Activated naive CD4-positive, alpha-beta T cell treated with anti-CD3 and anti-CD28 coated beads for 36 hours (primary cell): ENCODE measurements at regions of chr19 and their contacts with region 1.

Region 1: DNA sequence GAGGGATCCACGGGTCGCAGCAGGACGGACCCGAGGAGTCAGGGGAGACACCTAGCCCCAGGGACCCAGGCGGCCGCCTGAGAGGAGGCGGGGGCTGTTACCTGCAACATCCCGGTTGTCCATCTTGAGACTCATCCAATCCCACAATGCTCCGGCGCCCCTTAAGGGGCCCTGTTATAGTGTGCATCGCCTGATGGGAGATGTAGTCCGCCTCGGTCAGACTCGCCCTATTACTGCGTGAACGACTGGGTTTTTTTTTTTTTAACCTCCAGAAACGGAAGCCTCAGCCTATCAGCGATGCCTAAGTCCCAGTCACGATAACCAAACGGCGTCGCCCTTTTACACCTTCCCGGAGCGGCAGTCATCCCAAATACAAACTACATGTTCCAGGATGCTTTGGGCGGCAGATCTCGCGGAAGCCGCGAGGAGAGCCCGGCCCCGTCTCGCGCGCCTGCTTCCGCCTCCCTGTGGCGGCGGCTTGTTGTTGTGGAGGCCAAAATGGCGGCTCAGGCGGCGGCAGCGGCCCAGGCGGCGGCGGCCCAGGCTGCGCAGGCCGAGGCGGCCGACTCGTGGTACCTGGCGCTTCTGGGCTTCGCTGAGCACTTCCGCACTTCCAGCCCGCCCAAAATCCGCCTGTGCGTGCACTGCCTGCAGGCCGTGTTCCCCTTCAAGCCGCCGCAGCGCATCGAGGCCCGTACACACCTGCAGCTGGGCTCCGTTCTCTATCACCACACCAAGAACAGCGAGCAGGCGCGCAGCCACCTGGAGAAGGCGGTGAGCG is at the starts of genes MAU2 and SUGP1:
- DNase-seq: peak; percentile 94
- H3K4me3 Mint-ChIP-seq: peak within 1 kb of the TSS; percentile 93
- H3K27ac Mint-ChIP-seq: peak within 1 kb of the TSS; percentile 99
- H3K4me1 Mint-ChIP-seq: peaks cover 47% of the 10 kb centered on the region
- H3K27me3 Mint-ChIP-seq: no peaks in the 10 kb centered on the region
- total RNA-seq, gene MAU2: 38.6 to 42.5 TPM
- total RNA-seq, gene SUGP1: 31.7 to 32.4 TPM

Region 2: GRCh38 chr19:18636183-18636968 is 684.2 kb before region 1 on chr19:
- CTCF ChIA-PET with region 1: no interaction called
- intact Hi-C with region 1: loop called (anchors 1 kb)
- DNase-seq: peak; percentile 100
- H3K4me3 Mint-ChIP-seq: peak overlapping the region; percentile 81
- H3K27ac Mint-ChIP-seq: peak overlapping the region; percentile 57
- H3K4me1 Mint-ChIP-seq: peaks cover 23% of the 10 kb centered on the region
- H3K27me3 Mint-ChIP-seq: no peaks in the 10 kb centered on the region

Region 3: DNA sequence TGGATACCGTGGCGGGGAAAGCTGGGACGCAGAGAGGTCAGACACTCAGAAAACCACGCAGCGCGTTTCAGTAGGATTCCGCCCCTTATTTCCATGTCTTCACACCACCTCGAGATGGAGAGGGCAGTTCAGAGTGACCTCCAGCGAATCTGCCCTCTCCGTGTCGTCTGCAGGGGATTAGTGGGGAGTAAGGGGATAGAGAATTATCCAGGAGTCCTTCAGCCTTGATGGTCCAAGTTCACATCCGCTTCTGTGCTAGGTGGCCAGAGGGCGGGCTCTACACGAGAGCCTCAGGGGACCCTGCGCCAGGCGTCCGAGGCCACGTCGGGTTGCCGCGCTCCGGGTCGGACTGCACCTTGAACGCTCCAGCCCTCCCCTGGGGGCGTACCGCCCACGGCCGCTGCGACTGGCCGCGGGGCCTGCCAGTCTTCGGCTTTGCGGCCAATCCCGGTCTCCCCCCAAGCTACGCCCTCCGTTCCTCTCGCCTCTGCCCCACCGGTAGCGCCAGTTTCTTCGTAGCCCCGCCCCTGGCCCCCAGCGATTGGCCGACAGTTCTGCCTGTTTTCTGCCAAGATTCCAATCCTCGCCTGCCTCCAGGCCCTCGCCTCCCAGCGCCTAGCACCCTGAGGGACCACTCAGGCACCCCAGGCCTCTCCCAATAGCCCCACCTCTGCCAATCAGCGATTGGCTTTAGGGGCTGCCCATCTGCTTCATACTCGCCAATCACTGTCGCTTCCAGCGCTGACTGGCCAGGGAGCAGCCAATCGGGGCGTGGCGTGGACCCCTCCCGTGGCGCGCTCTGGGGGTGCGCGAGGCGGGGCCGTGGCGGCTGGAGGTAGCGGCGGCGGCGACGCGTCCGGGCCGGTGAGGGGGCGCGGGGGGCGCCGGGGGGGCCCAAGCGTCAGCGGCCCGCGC is 257.1 kb before region 1 on chr19 and contains the start of gene SLC25A42:
- CTCF ChIA-PET with region 1: no interaction called
- intact Hi-C with region 1: loop called (anchors 1 kb)
- DNase-seq: peak; percentile 99
- H3K4me3 Mint-ChIP-seq: peak within 1 kb of the TSS; percentile 85
- H3K27ac Mint-ChIP-seq: peak within 1 kb of the TSS; percentile 83
- H3K4me1 Mint-ChIP-seq: peaks cover 41% of the 10 kb centered on the region
- H3K27me3 Mint-ChIP-seq: no peaks in the 10 kb centered on the region
- total RNA-seq, gene SLC25A42: 6.7 to 8.5 TPM

Region 4: GRCh38 chr19:19122902-19123301 is 197.7 kb before region 1 on chr19:
- CTCF ChIA-PET with region 1: no interaction called
- intact Hi-C with region 1: no loop called
- DNase-seq: no peak
- H3K4me3 Mint-ChIP-seq: no peak overlapping the region
- H3K27ac Mint-ChIP-seq: no peak overlapping the region
- H3K4me1 Mint-ChIP-seq: no peaks in the 10 kb centered on the region
- H3K27me3 Mint-ChIP-seq: no peaks in the 10 kb centered on the region

Region 5: DNA sequence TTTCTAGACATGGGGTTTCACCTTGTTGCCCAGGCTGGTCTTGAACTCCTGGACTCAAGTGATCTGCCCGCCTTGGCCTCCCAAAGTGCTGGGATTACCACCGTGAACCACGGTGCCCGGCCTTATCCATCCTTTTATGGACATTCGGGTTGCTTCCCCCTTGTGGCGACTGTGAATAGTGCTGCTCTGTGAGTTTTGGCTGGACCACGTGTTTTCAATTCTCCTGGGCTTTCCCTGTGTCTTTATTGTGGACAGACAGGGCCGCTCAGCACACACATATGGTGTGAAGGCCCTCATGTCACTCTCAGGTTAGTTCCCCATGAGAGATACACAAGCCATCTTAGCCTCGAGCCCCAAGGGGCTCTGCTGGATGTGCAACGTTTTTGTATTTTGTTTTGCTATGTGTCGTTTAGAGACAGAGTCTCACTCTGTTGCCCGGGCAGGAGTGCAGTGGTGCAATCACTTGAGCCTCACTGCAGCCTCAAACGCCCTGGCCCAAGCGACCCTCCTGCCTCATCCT is 40.6 kb after region 1 on chr19:
- CTCF ChIA-PET with region 1: interaction called, 3 read pairs
- intact Hi-C with region 1: loop called (anchors 2 kb)
- DNase-seq: peak; percentile 92
- H3K4me3 Mint-ChIP-seq: no peak overlapping the region
- H3K27ac Mint-ChIP-seq: no peak overlapping the region
- H3K4me1 Mint-ChIP-seq: peaks cover 27% of the 10 kb centered on the region
- H3K27me3 Mint-ChIP-seq: no peaks in the 10 kb centered on the region

Region 6: DNA sequence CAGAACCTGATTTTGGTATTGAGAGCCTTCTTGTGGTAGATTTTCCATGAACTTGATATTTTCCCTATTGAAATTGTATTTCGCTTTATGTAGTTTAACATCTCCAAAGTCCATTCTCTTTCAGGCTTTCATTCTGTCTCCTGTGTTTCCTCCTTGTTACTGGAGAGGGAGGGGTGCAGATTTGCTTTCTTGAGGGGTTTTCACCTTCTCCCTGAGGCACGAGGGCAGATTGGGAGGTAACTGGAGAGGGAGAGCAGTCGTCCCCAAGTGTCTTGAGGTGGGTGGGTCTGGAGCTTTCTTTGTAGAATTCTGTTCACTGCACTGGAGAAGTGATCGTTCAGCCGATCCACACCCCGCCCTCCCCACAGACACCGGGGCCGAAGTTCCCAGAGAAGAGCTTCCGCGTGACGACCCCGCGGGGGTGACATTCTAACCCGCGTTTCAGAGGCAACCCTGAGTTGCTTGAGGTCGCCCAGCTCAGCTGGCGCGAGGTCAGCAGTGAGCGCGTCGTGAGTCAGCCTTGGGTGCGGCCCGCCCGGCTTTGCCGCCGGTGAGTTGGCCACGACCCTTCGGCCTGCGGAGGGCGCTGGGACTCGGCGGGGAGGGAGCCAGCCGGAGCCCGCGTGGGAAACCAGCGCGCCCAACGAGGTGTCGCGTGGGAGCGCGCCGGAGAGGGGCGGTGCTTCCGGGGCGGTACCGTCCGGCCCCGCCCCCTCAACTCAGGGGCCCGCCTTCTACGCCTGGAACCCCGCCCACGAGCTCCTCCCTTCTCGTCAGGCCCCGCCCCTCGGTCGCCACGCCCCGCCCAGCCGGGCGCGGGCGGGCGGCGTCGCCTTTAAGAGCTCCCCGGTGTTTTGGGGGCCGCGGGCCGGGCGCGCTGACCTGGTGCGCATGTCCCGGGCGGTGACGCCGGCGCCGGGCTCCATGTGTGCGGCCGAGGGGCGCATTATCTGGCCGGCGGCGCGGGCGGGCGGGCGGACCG is 84.6 kb after region 1 on chr19 and contains the start of gene GATAD2A:
- CTCF ChIA-PET with region 1: no interaction called
- intact Hi-C with region 1: loop called (anchors 1 kb)
- DNase-seq: peak; percentile 88
- H3K4me3 Mint-ChIP-seq: peak within 1 kb of the TSS; percentile 86
- H3K27ac Mint-ChIP-seq: peak within 1 kb of the TSS; percentile 91
- H3K4me1 Mint-ChIP-seq: peaks cover 63% of the 10 kb centered on the region
- H3K27me3 Mint-ChIP-seq: no peaks in the 10 kb centered on the region
- total RNA-seq, gene GATAD2A: 91.2 to 100 TPM

Region 7: GRCh38 chr19:19776041-19777008 is 455.8 kb after region 1 on chr19:
- CTCF ChIA-PET with region 1: no interaction called
- intact Hi-C with region 1: loop called (anchors 1 kb)
- DNase-seq: peak; percentile 95
- H3K4me3 Mint-ChIP-seq: peak overlapping the region; percentile 90
- H3K27ac Mint-ChIP-seq: peak overlapping the region; percentile 90
- H3K4me1 Mint-ChIP-seq: peaks cover 44% of the 10 kb centered on the region
- H3K27me3 Mint-ChIP-seq: no peaks in the 10 kb centered on the region